Posterior cingulate gyrus (tissue), 11 donors: ENCODE measurements at regions of chr15 and their contacts with region 1.

Region 1: DNA sequence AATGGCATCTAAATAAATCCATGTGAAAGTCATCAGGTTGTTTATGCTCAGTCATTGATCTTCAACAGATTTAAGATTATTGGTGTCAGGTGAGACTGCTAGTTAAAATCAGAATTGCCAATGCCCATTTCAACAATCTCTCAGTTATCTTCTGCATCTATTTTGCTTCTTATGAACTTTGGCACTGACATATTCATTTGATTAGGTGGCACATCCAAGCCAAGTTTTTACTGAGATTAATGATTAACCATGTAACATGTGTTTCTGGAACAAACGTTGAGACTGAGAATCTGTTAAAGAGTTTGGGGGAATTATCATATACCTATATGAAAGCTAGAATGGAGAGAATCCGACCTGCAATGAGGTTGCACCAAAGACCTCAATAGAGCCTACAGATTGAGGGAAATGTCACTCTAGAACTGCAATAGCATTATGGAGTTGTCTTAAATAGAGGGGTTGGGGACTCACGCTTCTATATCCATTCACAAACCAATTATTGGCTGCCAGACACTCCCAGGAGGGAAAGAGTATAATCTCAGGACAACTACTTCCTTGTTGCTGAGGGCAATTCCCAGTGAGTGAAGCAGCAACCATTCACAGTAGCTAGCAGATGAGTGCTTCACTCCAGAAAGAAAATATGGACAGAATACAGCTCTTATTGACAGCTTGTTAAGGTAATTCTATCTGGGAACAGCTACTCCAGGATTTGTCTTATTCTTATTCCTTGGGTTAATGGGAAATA is 891.3 kb downstream of the SQOR start:
- DNase-seq: no peak

Region 2: DNA sequence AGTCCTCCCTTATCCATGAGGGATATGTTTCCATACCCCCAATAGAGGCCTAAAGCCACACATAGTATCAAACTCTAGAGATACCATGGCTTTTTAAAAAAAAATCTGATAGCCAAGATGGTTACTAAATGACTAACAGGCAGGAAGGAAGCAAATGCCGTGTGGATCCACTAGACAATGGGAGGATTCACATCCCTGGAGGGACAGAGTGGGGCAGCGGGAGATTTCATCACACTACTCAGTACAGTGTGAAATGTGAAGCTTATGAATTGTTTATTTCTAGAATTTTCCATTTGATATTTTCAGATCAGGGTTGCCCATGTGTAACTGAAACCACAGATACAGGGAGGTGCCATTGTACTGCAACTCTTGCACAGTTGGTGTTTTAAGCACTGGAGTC is 64.7 kb before region 1 on chr15:
- intact Hi-C with region 1: loop called (anchors 2 kb)
- DNase-seq: no peak

Region 3: DNA sequence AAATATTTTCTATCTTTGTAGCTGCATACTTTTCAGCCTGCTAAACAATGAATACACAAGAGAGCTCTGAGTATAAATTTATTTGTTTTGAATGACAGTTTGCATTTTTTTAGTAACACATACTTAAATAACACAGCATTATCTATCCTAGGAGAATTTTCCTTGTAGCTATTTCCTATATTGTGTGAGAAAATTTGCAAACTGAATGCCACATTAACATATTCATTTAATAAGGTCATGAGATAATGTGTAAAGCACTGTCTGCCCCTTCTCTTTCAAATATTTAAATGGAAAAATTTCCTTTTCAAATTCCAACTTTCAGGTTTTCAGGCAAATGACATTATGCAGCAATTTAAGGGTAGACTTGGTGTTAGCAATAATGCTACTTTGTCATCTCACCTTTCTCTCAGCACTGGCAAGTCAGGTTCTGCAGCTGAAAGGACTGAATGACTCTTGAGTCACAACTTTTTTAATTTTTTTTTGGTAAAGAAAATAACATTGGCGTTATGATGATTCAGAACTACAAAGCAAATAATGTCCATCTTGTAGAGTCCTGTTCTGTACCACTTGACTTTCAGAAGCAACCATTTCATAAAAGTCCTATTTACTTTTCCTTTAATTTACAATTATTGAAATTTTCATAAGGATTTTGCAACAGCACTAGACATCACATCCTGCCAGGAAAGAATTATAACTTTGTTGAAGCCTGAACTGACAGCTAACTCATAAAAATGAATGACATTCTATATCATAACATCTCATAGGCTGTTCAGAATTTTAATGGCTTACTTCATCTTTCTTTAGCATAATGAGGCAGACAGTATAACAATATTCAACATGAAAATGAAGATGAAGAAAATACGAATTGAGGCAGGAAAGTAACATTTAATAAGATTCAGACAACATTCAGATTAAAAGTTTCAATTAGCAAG is 509.6 kb after region 1 on chr15:
- intact Hi-C with region 1: no loop called
- DNase-seq: no peak